PC-9 (cell line): ENCODE measurements at regions of chr2 and their contacts with region 1.

Region 1: DNA sequence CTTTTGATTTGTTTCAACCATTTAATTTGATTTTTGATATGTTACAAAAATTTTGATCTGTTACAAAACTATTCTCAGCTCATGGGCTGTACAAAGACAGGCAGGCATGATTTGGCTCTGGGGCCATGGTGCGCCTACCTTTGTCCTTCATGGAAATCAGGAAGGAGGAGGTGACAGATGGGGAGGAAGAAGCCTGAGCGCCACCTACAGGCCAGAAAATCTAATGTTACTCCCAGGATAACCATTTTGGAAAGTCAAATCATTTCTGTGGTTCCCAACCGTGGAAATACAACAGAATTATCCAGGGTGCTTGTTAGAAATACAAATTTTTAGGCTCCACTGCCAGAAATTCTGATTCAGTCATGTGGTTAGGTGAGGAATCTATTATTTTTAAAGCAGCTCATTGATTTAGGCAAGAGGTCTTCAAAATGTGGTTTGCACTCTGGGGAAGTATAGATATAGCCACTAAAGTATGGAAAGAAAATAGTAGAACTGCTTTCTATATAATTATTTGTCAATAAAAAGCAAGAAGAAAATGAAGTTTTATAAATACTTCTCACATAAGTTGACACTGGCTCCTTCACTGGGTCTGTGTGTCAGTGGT is 93.9 kb downstream of the EVA1A start:
- DNase-seq: peak in 1 of 2 experiments; percentile 33
- H3K4me3 ChIP-seq: no peak overlapping the region
- H3K27ac ChIP-seq: no peak overlapping the region
- H3K4me1 ChIP-seq: peaks cover 14% of the 10 kb centered on the region; the same call in 1 of the 2 replicates
- H3K27me3 ChIP-seq: no peaks in the 10 kb centered on the region
- CTCF ChIP-seq: peak; percentile 73

Region 2: GRCh38 chr2:75676464-75676863 is 209.7 kb after region 1 on chr2:
- CTCF ChIA-PET with region 1: no interaction called
- POLR2A ChIA-PET with region 1: no interaction called
- intact Hi-C with region 1: loop called (anchors 1 kb)
- DNase-seq: no peak
- H3K4me3 ChIP-seq: no peak overlapping the region
- H3K27ac ChIP-seq: no peak overlapping the region
- H3K4me1 ChIP-seq: no peaks in the 10 kb centered on the region
- H3K27me3 ChIP-seq: no peaks in the 10 kb centered on the region
- CTCF ChIP-seq: no peak

Region 3: DNA sequence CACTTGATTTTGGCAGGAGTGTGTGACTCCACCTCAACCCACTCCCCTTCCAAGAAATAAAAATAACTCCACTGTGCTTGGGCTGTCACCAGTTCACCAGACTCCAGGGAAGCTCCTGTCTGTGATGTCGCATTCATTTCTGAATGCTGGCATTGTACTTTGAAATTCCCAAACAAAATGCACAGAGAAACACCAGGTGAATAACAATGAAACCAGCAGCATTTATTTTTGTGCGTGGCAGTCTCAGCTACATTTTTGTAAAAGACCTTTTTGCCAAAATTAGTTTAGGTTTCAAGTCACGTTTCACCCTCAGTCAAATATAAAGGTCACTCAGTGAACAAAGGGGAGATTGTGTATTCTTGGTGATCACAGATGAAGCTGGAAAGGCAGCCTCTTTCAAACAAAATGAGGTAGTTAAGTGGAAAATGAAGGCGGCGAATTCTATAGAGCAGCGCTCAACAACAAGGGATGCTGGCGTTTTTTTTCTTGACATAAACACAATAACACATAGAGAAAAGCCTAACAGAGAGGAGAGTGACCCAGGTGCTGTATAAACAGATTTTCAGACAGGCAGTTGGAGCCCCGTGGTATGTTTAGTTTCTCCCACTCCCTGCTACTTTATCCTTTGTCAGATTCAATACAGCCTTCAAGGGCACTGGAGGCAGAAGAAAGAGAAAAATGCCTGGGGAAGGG is 454.2 kb after region 1 on chr2:
- CTCF ChIA-PET with region 1: no interaction called
- POLR2A ChIA-PET with region 1: no interaction called
- intact Hi-C with region 1: no loop called
- DNase-seq: no peak
- H3K4me3 ChIP-seq: no peak overlapping the region
- H3K27ac ChIP-seq: no peak overlapping the region
- H3K4me1 ChIP-seq: no peaks in the 10 kb centered on the region
- H3K27me3 ChIP-seq: peaks cover 11% of the 10 kb centered on the region; the same call in 1 of the 2 replicates
- CTCF ChIP-seq: no peak